ENCODE measurements at regions of chr4 and their contacts with region 1.

Region 1: GRCh38 chr4:87530868-87531267 is 1.7 kb upstream of the SPARCL1 start:
- DNase-seq: peak; percentile 24 to 71
- ATAC-seq: peak; percentile 16

Region 2: GRCh38 chr4:86452947-86453531 is 1077.8 kb before region 1 on chr4:
- intact Hi-C with region 1: no loop called
- DNase-seq: peak in 1 of 2 donors; percentile 6
- ATAC-seq: no peak

Region 3: GRCh38 chr4:87304671-87305432 is 226.0 kb before region 1 on chr4:
- intact Hi-C with region 1: no loop called
- DNase-seq: no peak
- ATAC-seq: peak; percentile 68

Region 4: GRCh38 chr4:87758270-87758669 is 227.4 kb after region 1 on chr4:
- intact Hi-C with region 1: no loop called
- DNase-seq: no peak
- ATAC-seq: no peak

Region 5: GRCh38 chr4:88007304-88008121 is 476.6 kb after region 1 on chr4 and contains the start of gene PKD2:
- intact Hi-C with region 1: loop called in 1 of 2 experiments (anchors 10 kb)
- DNase-seq: peak; percentile 80 to 88
- ATAC-seq: peak; percentile 98
- total RNA-seq, gene PKD2: 5.4 to 11.4 TPM